IMR-90 (cell line): ENCODE measurements at regions of chr3 and their contacts with region 1.

Region 1: GRCh38 chr3:179732661-179733348 is 80.0 kb downstream of the USP13 start:
- DNase-seq: no peak
- ATAC-seq: no peak
- H3K4me3 ChIP-seq: no peak overlapping the region
- H3K27ac ChIP-seq: no peak overlapping the region
- H3K4me1 ChIP-seq: peaks cover 1% of the 10 kb centered on the region
- H3K27me3 ChIP-seq: no peaks in the 10 kb centered on the region
- CTCF ChIP-seq: no peak
- POLR2A ChIP-seq: no peak
- RAD21 ChIP-seq: no peak

Region 2: GRCh38 chr3:179688850-179689249 is 44.0 kb before region 1 on chr3:
- CTCF ChIA-PET with region 1: no interaction called
- POLR2A ChIA-PET with region 1: no interaction called
- dilution Hi-C with region 1: no loop called
- in situ Hi-C with region 1: no loop called
- intact Hi-C with region 1: loop called (anchors 1 kb)
- DNase-seq: peak; percentile 58
- ATAC-seq: peak; percentile 69
- H3K4me3 ChIP-seq: no peak overlapping the region
- H3K27ac ChIP-seq: no peak overlapping the region
- H3K4me1 ChIP-seq: peaks cover 4% of the 10 kb centered on the region
- H3K27me3 ChIP-seq: no peaks in the 10 kb centered on the region
- CTCF ChIP-seq: no peak
- POLR2A ChIP-seq: no peak
- RAD21 ChIP-seq: no peak

Region 3: GRCh38 chr3:179967622-179968021 is 234.8 kb after region 1 on chr3:
- CTCF ChIA-PET with region 1: no interaction called
- POLR2A ChIA-PET with region 1: no interaction called
- dilution Hi-C with region 1: no loop called
- in situ Hi-C with region 1: no loop called
- intact Hi-C with region 1: no loop called
- DNase-seq: peak; percentile 0
- ATAC-seq: no peak
- H3K4me3 ChIP-seq: no peak overlapping the region
- H3K27ac ChIP-seq: no peak overlapping the region
- H3K4me1 ChIP-seq: no peaks in the 10 kb centered on the region
- H3K27me3 ChIP-seq: no peaks in the 10 kb centered on the region
- CTCF ChIP-seq: no peak
- POLR2A ChIP-seq: no peak
- RAD21 ChIP-seq: no peak